CD14-positive monocyte (primary cell): ENCODE measurements at regions of chr3 and their contacts with region 1.

Region 1: GRCh38 chr3:48157950-48158376 is 30.3 kb downstream of the CDC25A start:
- DNase-seq: peak; percentile 10 to 28 (median 10)
- H3K4me3 ChIP-seq: no peak overlapping the region
- H3K4me3 Mint-ChIP-seq: no peak overlapping the region
- H3K27ac ChIP-seq: no peak overlapping the region
- H3K27ac Mint-ChIP-seq: peak overlapping the region in 2 of 7 donors; percentile 55 to 63
- H3K4me1 ChIP-seq: no peaks in the 10 kb centered on the region
- H3K4me1 Mint-ChIP-seq: peaks cover 2% of the 10 kb centered on the region
- H3K27me3 ChIP-seq: no peaks in the 10 kb centered on the region
- H3K27me3 Mint-ChIP-seq: no peaks in the 10 kb centered on the region
- CTCF ChIP-seq: peak; percentile 75

Region 2: GRCh38 chr3:48232734-48233133 is 74.8 kb after region 1 on chr3:
- intact Hi-C with region 1: no loop called
- DNase-seq: peak; percentile 23 to 40 (median 33)
- H3K4me3 ChIP-seq: peak overlapping the region in 1 of 3 experiments; percentile 5
- H3K4me3 Mint-ChIP-seq: no peak overlapping the region
- H3K27ac ChIP-seq: no peak overlapping the region
- H3K27ac Mint-ChIP-seq: no peak overlapping the region
- H3K4me1 ChIP-seq: peaks cover 49 to 55% of the 10 kb centered on the region in 2 donors
- H3K4me1 Mint-ChIP-seq: peaks cover 49% of the 10 kb centered on the region
- H3K27me3 ChIP-seq: no peaks in the 10 kb centered on the region
- H3K27me3 Mint-ChIP-seq: no peaks in the 10 kb centered on the region
- CTCF ChIP-seq: peak; percentile 49

Region 3: DNA sequence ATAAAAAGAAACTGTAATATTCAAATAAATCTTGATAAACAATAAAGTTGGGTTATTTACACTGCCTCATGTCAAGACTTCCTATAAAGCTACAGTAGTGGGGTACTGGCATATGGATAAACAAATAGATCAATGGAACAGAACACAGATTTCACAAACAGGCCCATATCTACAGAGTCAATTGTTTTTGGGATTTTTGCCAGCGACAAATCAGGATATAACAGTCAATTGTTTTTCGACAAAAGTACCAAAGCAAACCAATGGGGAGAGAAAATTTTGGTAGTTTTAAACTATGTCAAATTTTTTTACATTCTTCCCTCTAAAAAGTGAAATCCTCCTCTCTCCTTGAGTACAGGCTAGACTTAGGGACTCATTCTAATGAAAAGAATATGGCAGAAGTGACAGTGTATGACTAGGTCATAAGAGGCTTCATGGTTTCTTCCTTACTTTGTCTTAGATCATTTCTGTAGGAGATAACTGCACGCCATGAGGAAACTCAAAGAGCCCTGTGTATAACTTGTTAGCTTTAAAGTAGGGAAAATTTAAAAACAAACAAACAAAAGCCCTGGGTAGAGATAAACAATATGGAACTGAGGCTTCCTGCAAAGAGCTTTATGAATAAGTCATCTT is 1611.4 kb after region 1 on chr3:
- intact Hi-C with region 1: loop called in 1 of 2 experiments (anchors 10 kb)
- DNase-seq: no peak
- H3K4me3 ChIP-seq: no peak overlapping the region
- H3K4me3 Mint-ChIP-seq: no peak overlapping the region
- H3K27ac ChIP-seq: no peak overlapping the region
- H3K27ac Mint-ChIP-seq: no peak overlapping the region
- H3K4me1 ChIP-seq: no peaks in the 10 kb centered on the region
- H3K4me1 Mint-ChIP-seq: no peaks in the 10 kb centered on the region
- H3K27me3 ChIP-seq: no peaks in the 10 kb centered on the region
- H3K27me3 Mint-ChIP-seq: no peaks in the 10 kb centered on the region
- CTCF ChIP-seq: no peak